CD8-positive, alpha-beta T cell (primary cell): ENCODE measurements at regions of chr2 and their contacts with region 1.

Region 1: GRCh38 chr2:9555297-9556141 is at the start of gene ADAM17:
- DNase-seq: peak; percentile 62 to 93 (median 81)
- ATAC-seq: peak; percentile 88
- H3K4me3 ChIP-seq: peak within 1 kb of the TSS; percentile 91 to 96
- H3K4me3 Mint-ChIP-seq: peak within 1 kb of the TSS; percentile 94
- H3K27ac ChIP-seq: peak within 1 kb of the TSS; percentile 93 to 94
- H3K27ac Mint-ChIP-seq: peak within 1 kb of the TSS; percentile 93
- H3K4me1 ChIP-seq: peaks cover 37% of the 10 kb centered on the region
- H3K4me1 Mint-ChIP-seq: peaks cover 49% of the 10 kb centered on the region
- H3K27me3 ChIP-seq: no peaks in the 10 kb centered on the region
- H3K27me3 Mint-ChIP-seq: no peaks in the 10 kb centered on the region
- CTCF ChIP-seq: no peak
- total RNA-seq, gene ADAM17: 20.0 to 25.1 TPM

Region 2: DNA sequence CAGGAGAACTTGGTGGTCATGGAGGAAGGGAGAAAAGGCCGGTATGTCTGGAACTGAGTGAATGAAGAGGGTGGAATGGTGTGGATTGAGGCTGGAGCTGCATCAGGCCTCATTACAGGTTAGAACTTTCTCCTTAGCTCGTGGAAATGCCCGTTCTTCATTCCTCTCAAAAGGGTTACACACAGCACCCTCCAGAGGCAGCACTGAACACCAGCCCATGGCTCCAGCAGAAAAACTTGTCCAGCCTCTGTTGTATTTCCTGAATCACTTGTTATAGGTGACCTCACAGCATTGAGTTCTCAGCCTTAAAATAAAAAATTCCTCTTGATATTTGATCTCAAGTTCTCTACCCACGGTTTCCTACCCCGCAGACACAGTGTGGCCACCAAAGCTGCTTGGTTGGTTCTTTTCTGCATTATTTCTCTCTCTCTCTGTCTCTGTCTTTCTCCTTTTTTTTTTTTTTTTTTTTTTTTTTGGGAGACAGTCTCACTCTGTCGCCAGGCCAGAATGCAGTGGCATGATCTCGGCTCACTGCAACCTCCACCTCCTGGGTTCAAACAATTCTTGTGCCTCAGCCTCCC is 221.8 kb before region 1 on chr2:
- CTCF ChIA-PET with region 1: no interaction called
- POLR2A ChIA-PET with region 1: no interaction called
- intact Hi-C with region 1: no loop called
- DNase-seq: peak in 2 of 9 experiments; percentile 5 to 8
- ATAC-seq: no peak
- H3K4me3 ChIP-seq: no peak overlapping the region
- H3K4me3 Mint-ChIP-seq: no peak overlapping the region
- H3K27ac ChIP-seq: no peak overlapping the region
- H3K27ac Mint-ChIP-seq: no peak overlapping the region
- H3K4me1 ChIP-seq: no peaks in the 10 kb centered on the region
- H3K4me1 Mint-ChIP-seq: peaks cover 6% of the 10 kb centered on the region
- H3K27me3 ChIP-seq: no peaks in the 10 kb centered on the region
- H3K27me3 Mint-ChIP-seq: peaks cover 4% of the 10 kb centered on the region
- CTCF ChIP-seq: no peak

Region 3: GRCh38 chr2:9423100-9423921 is 132.2 kb before region 1 on chr2 and contains the starts of genes CPSF3 and ITGB1BP1:
- CTCF ChIA-PET with region 1: no interaction called
- POLR2A ChIA-PET with region 1: interaction called, 4 read pairs
- intact Hi-C with region 1: loop called (anchors 1 to 2 kb)
- DNase-seq: peak; percentile 92 to 99 (median 97)
- ATAC-seq: peak; percentile 86
- H3K4me3 ChIP-seq: peak within 1 kb of the TSS; percentile 93 to 98
- H3K4me3 Mint-ChIP-seq: no peak within 1 kb of the TSS
- H3K27ac ChIP-seq: peak within 1 kb of the TSS; percentile 89 to 90
- H3K27ac Mint-ChIP-seq: peak within 1 kb of the TSS; percentile 89
- H3K4me1 ChIP-seq: peaks cover 22% of the 10 kb centered on the region
- H3K4me1 Mint-ChIP-seq: peaks cover 34% of the 10 kb centered on the region
- H3K27me3 ChIP-seq: no peaks in the 10 kb centered on the region
- H3K27me3 Mint-ChIP-seq: no peaks in the 10 kb centered on the region
- CTCF ChIP-seq: no peak
- total RNA-seq, gene CPSF3: 14.1 to 14.7 TPM
- total RNA-seq, gene ITGB1BP1: 37.2 to 38.8 TPM

Region 4: DNA sequence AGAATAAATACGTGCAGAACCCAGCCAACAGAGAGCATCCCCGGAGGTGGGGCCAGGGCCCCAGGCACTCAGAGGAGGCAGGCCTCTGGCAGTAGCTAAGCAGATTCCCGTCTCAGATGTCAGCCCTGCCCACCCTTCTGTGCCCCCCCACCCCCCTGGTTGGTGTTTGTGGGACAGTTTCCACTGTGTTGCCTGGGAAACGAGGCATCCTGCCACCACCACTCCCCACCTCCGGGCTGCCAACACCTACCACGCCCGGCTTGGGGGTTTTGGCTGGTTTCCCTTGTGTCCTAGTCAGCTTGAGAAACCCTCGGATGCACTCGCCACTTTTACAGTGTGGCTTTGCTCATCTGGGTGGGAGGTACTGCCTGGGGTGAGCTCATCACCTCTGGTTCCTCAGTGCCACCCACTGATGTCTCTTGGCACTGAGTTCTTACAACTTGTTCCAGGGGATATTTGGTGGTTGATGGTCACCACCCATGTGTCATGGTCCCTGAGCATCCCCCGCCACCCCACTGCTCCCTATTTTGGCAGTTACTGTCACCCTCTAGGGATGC is 147.6 kb after region 1 on chr2:
- CTCF ChIA-PET with region 1: no interaction called
- POLR2A ChIA-PET with region 1: interaction called, 4 read pairs
- intact Hi-C with region 1: loop called in 1 of 2 experiments (anchors 2 kb)
- DNase-seq: peak; percentile 65 to 98 (median 84)
- ATAC-seq: peak; percentile 88
- H3K4me3 ChIP-seq: no peak overlapping the region
- H3K4me3 Mint-ChIP-seq: no peak overlapping the region
- H3K27ac ChIP-seq: peak overlapping the region; percentile 54 to 91
- H3K27ac Mint-ChIP-seq: peak overlapping the region; percentile 63
- H3K4me1 ChIP-seq: peaks cover 17% of the 10 kb centered on the region
- H3K4me1 Mint-ChIP-seq: peaks cover 28% of the 10 kb centered on the region
- H3K27me3 ChIP-seq: no peaks in the 10 kb centered on the region
- H3K27me3 Mint-ChIP-seq: no peaks in the 10 kb centered on the region
- CTCF ChIP-seq: no peak

Region 5: GRCh38 chr2:9843229-9844035 is 287.9 kb after region 1 on chr2 and contains the start of gene TAF1B:
- CTCF ChIA-PET with region 1: no interaction called
- POLR2A ChIA-PET with region 1: interaction called, 4 read pairs
- intact Hi-C with region 1: loop called in 1 of 2 experiments (anchors 2 kb)
- DNase-seq: peak; percentile 53 to 93 (median 84)
- ATAC-seq: peak; percentile 84
- H3K4me3 ChIP-seq: peak within 1 kb of the TSS; percentile 71 to 74
- H3K4me3 Mint-ChIP-seq: peak within 1 kb of the TSS; percentile 93
- H3K27ac ChIP-seq: peak within 1 kb of the TSS; percentile 65 to 84
- H3K27ac Mint-ChIP-seq: peak within 1 kb of the TSS; percentile 90
- H3K4me1 ChIP-seq: peaks cover 20% of the 10 kb centered on the region
- H3K4me1 Mint-ChIP-seq: peaks cover 48% of the 10 kb centered on the region
- H3K27me3 ChIP-seq: no peaks in the 10 kb centered on the region
- H3K27me3 Mint-ChIP-seq: no peaks in the 10 kb centered on the region
- CTCF ChIP-seq: no peak
- total RNA-seq, gene TAF1B: 13.3 to 15.8 TPM